ENCODE measurements at regions of chr1 and their contacts with region 1.

Region 1: DNA sequence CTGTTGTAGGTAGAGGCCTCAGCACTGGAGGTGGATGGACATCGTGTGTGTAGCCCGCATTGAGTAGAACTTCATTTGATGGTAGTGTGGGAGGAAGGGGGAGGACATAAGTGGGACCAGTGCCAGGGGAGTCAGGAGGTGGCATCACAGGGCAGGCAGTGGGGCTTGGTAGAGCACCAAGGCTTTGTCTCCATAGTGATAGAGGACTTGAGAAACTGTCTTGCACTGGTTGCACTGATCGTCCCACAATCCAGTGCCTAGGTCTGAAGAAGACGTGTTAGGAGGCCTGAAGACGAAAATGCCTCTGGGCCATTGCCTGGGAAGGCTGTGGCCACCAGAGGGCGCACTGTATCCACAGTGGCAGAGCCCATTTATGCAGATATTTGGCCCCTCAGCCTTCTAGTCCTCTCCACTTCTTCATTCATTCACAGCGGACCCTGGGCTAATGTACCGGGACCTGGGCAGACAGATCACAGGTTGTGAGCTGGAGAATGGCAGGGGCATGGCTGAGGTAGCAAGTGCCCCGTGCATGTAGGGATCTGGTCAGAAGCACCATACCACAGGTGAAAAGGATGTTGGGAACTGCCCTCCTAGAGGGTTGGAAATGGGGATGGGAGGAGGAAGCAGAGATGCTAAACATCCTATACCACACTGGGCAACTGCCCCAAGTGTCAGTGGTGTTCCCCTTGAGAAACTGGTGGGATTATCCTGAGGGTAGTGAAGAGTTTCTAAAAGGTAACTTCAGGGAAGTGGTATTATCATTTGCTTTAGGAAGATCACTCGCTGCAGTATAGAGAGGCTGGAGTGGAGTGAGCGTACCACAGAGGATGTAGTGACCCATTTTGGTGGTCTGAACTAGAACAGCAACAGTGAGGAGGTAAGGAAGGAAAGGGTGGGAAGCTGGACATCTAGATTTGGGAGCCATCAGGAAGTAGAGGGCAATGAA is 95.3 kb downstream of the PIK3R3 start:
- DNase-seq: peak; percentile 76 to 90
- H3K4me3 ChIP-seq: no peak overlapping the region
- H3K4me1 ChIP-seq: no peaks in the 10 kb centered on the region; the same call in 1 of the 2 replicates
- H3K27me3 ChIP-seq: no peaks in the 10 kb centered on the region

Region 2: GRCh38 chr1:46179138-46180081 is 142.2 kb after region 1 on chr1:
- in situ Hi-C with region 1: loop called (anchors 5 kb)
- DNase-seq: peak; percentile 85 to 90
- H3K4me3 ChIP-seq: no peak overlapping the region
- H3K4me1 ChIP-seq: no peaks in the 10 kb centered on the region
- H3K27me3 ChIP-seq: no peaks in the 10 kb centered on the region

Region 3: DNA sequence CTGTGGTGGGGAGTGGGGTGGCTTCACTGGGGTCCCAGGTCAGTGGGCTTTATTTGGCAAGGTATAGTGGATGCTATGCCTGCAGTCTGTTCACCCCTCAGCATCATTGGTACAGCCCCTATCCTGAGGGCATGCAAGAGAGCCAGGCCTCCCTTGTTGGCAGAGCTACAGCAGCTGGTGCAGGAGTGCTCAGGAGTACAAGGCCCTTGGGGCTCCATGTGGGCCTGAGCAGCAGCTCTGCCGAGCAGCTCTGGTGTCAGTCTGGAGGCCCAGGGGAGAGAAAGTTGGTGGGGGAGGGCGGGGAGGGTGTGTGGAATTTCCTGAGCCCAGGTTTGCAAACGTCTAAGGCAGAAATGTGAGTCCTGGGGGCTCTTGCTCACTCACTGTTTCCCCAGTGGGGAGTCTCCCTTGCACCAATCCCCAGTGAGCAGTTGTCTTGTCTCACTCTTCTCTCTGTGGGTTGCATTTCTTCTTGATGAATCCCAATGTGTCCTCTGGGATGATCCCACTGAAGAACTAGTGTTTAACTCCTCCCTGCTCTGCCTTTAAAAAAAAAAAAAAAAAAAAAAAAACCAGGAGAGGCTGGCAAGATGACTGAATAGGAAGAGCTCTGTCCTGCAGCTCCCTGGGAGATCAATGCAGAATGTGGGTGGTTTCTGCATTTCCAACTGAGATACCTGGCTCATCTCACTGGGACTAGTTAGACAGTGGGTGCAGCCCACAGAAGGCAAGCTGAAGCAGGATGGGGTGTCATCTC is 946.8 kb after region 1 on chr1:
- in situ Hi-C with region 1: no loop called
- DNase-seq: no peak
- H3K4me3 ChIP-seq: no peak overlapping the region
- H3K4me1 ChIP-seq: no peaks in the 10 kb centered on the region
- H3K27me3 ChIP-seq: no peaks in the 10 kb centered on the region; the same call in 1 of the 2 replicates

Measured in HAP-1 (cell line).